ENCODE measurements at regions of chr3 and their contacts with region 1.

Region 1: GRCh38 chr3:179811321-179812095 is 158.7 kb downstream of the USP13 start:
- DNase-seq: peak; percentile 77
- H3K4me3 Mint-ChIP-seq: no peak overlapping the region
- H3K27ac Mint-ChIP-seq: peak overlapping the region; percentile 30
- H3K4me1 Mint-ChIP-seq: peaks cover 11% of the 10 kb centered on the region
- H3K27me3 Mint-ChIP-seq: no peaks in the 10 kb centered on the region
- CTCF ChIP-seq: peak; percentile 85

Region 2: DNA sequence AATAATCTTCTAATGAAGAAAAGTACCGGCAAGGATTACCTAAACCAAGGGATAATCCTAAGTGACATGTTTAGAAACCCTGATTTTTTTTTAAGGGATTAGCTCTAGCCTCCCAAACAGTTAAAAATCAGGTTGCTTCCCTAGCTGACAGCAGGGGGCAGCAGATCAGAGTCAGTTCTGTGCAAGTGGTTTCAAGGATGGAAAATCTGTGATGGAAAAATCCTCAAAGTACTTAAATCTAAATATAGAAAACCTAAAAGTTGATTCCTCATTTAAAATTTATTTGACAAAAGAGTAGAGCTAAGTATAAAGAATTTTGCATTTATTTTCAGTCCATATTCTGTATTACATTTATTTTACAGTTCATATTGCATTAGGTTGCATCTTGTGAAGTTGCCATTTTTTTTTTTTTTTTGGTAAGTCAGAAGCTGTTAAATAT is 117.6 kb after region 1 on chr3:
- CTCF ChIA-PET with region 1: interaction called, 12 read pairs
- intact Hi-C with region 1: loop called (anchors 2 kb)
- DNase-seq: peak; percentile 83
- H3K4me3 Mint-ChIP-seq: no peak overlapping the region
- H3K27ac Mint-ChIP-seq: no peak overlapping the region
- H3K4me1 Mint-ChIP-seq: peaks cover 8% of the 10 kb centered on the region
- H3K27me3 Mint-ChIP-seq: no peaks in the 10 kb centered on the region
- CTCF ChIP-seq: peak; percentile 92

Region 3: GRCh38 chr3:179981646-179982045 is 170.1 kb after region 1 on chr3:
- CTCF ChIA-PET with region 1: interaction called, 15 read pairs
- intact Hi-C with region 1: no loop called
- DNase-seq: no peak
- H3K4me3 Mint-ChIP-seq: no peak overlapping the region
- H3K27ac Mint-ChIP-seq: no peak overlapping the region
- H3K4me1 Mint-ChIP-seq: no peaks in the 10 kb centered on the region
- H3K27me3 Mint-ChIP-seq: no peaks in the 10 kb centered on the region
- CTCF ChIP-seq: no peak

Region 4: DNA sequence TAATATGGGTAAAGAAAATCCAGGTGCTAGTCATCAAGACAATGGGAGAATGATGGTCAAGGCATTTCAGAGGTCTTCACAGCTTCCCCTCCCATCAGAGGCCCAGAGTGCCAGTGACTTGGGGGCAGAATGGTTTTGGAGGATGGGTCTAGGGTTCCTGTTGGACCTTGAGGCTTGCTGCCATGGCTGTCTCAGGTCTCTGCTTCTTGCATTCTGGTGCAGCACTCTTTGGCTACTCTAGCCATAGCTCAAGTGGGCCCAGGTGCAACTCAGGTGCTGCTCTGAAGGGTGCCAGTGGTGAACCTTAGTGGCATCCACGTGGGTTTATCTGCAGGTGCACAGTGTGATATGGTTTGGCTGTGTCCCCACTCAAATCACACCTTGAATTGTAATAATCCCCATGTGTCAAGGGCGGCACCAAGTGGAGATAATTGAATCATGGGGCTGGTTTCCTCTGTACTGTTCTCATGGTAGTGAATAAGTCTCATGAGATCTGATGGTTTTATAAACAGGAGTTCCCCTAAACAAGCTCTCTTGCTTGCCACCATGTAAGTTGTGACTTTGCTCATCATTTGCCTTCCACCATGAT is 273.7 kb after region 1 on chr3:
- CTCF ChIA-PET with region 1: no interaction called
- intact Hi-C with region 1: loop called (anchors 1 kb)
- DNase-seq: no peak
- H3K4me3 Mint-ChIP-seq: no peak overlapping the region
- H3K27ac Mint-ChIP-seq: no peak overlapping the region
- H3K4me1 Mint-ChIP-seq: no peaks in the 10 kb centered on the region
- H3K27me3 Mint-ChIP-seq: no peaks in the 10 kb centered on the region
- CTCF ChIP-seq: no peak

Region 5: DNA sequence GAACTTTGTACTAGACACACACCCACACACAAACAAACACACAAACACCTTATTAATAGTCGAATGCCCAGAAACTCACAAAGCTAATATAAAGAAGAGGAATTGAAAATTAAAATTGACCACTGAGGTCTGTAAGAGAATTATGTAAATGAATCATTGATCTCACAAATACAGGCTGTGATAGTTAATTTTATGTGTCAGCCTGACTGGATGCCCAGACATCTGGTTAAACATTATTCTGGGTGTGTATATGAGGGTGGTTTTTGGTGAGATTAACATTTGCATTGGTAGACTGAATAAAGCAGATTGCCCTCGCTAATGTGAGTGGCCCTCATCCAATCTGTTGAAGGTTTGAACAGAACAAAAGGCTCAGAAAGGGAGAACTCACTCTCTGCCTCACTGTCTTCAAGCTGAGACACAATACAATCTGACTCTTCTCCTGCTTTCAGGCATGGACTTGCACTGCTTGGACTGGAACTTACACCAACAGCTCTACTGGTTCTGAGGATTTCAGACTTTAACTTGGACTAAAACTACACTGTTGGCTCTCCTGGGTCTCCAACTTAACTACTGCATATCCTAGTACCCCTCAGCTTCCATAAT is 591.1 kb after region 1 on chr3:
- CTCF ChIA-PET with region 1: no interaction called
- intact Hi-C with region 1: loop called (anchors 5 kb)
- DNase-seq: peak; percentile 22
- H3K4me3 Mint-ChIP-seq: peak overlapping the region; percentile 7
- H3K27ac Mint-ChIP-seq: peak overlapping the region; percentile 35
- H3K4me1 Mint-ChIP-seq: peaks cover 52% of the 10 kb centered on the region
- H3K27me3 Mint-ChIP-seq: no peaks in the 10 kb centered on the region
- CTCF ChIP-seq: no peak